T-cell (primary cell): ENCODE measurements at regions of chr1 and their contacts with region 1.

Region 1: DNA sequence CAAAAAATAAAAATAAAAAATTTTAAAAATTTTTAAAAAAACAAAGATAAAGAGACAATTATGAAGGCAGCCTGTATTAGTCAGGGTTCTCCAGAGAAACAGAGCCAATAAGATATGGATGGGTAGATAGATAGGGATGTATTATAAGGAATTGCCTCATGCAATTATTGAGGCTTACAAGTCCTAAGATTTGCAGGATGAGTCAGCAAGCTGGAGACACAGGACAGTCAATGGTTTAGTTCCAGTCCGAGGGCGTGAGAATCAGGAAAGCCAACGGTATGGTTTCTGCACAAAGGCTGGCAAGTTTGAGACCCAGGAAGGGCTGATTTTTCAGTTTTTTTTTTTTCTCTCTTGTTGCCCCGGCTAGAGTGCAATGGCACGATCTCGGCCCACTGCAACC is 24.1 kb upstream of the EIF4G3 start:
- DNase-seq: no peak
- ATAC-seq: no peak
- H3K4me3 ChIP-seq: no peak overlapping the region
- H3K4me3 Mint-ChIP-seq: no peak overlapping the region
- H3K27ac ChIP-seq: no peak overlapping the region
- H3K27ac Mint-ChIP-seq: no peak overlapping the region
- H3K4me1 ChIP-seq: no peaks in the 10 kb centered on the region
- H3K4me1 Mint-ChIP-seq: no peaks in the 10 kb centered on the region
- H3K27me3 ChIP-seq: peaks cover 0 to 5% of the 10 kb centered on the region in 2 experiments
- H3K27me3 Mint-ChIP-seq: peaks cover 0 to 9% of the 10 kb centered on the region in 2 donors

Region 2: DNA sequence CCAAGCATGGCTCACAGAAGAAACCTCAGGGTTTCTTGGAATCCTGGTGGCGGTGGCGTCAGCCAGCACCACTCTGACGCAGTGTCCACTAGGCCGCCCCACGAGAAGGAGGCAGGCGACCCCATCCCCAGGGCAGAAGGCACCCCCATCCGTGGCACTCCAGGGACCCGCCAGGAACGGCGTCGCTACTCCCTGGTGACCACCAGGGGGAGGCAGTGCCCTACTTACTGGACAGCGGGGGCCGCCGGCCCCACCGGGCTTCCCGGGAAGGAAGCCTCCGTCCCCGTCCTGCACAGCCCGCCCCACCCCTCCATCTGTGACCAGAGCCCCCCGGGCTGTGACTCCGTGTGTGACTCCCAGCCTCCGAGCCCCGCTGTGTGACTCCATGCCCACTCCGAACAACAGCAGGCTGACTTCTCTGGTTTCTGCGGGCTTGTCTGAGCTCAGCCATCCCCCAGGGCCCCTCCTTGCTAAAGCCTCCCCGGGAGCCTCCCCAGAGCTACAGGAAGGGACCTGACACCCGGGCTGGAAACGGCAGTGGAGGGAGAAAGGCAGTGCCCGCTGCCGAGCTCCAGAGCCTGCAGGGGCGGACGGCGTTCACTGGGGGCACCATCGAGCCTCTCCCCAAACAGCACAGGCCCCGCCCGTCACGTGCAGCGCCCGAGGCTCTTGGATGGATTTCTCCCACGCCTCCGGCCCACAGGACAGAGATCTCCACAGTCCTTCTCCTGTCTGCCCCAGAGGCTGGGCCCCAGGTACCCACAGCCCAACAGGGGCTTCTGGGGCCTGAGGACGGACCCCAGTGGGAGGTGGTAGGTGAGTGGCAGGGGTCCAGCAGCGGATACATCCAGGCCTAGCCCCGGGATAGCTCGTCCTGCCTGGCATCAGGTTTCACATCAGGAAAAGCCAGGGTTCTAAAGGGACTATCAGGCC is 504.1 kb before region 1 on chr1:
- CTCF ChIA-PET with region 1: interaction called, 3 to 19 read pairs
- POLR2A ChIA-PET with region 1: no interaction called
- DNase-seq: peak; percentile 38 to 80 (median 65)
- ATAC-seq: peak; percentile 94 to 96 (median 94)
- H3K4me3 ChIP-seq: peak overlapping the region; percentile 70 to 88
- H3K4me3 Mint-ChIP-seq: peak overlapping the region; percentile 81 to 90 (median 86)
- H3K27ac ChIP-seq: no peak overlapping the region
- H3K27ac Mint-ChIP-seq: peak overlapping the region in 1 of 2 donors; percentile 63
- H3K4me1 ChIP-seq: peaks cover 0 to 15% of the 10 kb centered on the region in 2 experiments
- H3K4me1 Mint-ChIP-seq: peaks cover 6 to 10% (median 8%) of the 10 kb centered on the region in 3 donors
- H3K27me3 ChIP-seq: peaks cover 0 to 35% of the 10 kb centered on the region in 2 experiments
- H3K27me3 Mint-ChIP-seq: no peaks in the 10 kb centered on the region

Region 3: GRCh38 chr1:21090463-21090862 is 110.3 kb before region 1 on chr1:
- CTCF ChIA-PET with region 1: interaction called in 1 of 2 experiments, 12 read pairs
- POLR2A ChIA-PET with region 1: no interaction called
- DNase-seq: no peak
- ATAC-seq: no peak
- H3K4me3 ChIP-seq: no peak overlapping the region
- H3K4me3 Mint-ChIP-seq: no peak overlapping the region
- H3K27ac ChIP-seq: no peak overlapping the region
- H3K27ac Mint-ChIP-seq: no peak overlapping the region
- H3K4me1 ChIP-seq: no peaks in the 10 kb centered on the region
- H3K4me1 Mint-ChIP-seq: peaks cover 2 to 13% (median 5%) of the 10 kb centered on the region in 3 donors
- H3K27me3 ChIP-seq: no peaks in the 10 kb centered on the region
- H3K27me3 Mint-ChIP-seq: no peaks in the 10 kb centered on the region

Region 4: DNA sequence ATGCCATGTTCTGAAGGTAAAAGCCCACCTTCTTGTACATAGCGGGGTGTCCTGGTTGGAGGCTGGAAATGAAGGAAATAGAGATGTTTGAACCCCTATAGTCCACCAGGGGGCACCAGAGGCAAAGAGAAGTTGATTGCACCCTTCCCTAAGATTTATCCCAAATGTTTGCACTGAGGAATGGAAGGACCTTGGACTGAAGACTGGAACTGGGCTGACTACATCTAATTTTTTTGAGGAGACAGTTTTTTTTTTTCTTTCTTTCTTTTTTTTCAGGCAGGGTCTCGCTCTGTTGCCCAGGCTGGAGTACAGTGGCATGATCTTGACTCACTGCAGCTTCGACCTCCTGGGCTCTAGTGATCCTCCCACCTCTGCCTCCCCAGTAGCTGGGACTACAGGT is 31.3 kb after region 1 on chr1:
- CTCF ChIA-PET with region 1: interaction called, 3 to 4 read pairs
- POLR2A ChIA-PET with region 1: interaction called in 1 of 2 experiments, 10 read pairs
- DNase-seq: peak in 20 of 35 experiments; percentile 11 to 71 (median 22)
- ATAC-seq: peak in 3 of 4 experiments; percentile 52 to 53 (median 53)
- H3K4me3 ChIP-seq: no peak overlapping the region
- H3K4me3 Mint-ChIP-seq: no peak overlapping the region
- H3K27ac ChIP-seq: no peak overlapping the region
- H3K27ac Mint-ChIP-seq: no peak overlapping the region
- H3K4me1 ChIP-seq: no peaks in the 10 kb centered on the region
- H3K4me1 Mint-ChIP-seq: no peaks in the 10 kb centered on the region
- H3K27me3 ChIP-seq: no peaks in the 10 kb centered on the region
- H3K27me3 Mint-ChIP-seq: no peaks in the 10 kb centered on the region